BJ (cell line): ENCODE measurements at regions of chr3 and their contacts with region 1.

Region 1: GRCh38 chr3:9843715-9844438 is at the start of gene RPUSD3:
- DNase-seq: peak; percentile 67
- H3K4me3 ChIP-seq: peak within 1 kb of the TSS; percentile 78
- H3K27me3 ChIP-seq: no peaks in the 10 kb centered on the region
- CTCF ChIP-seq: no peak
- polyA plus RNA-seq, gene RPUSD3: 28.5 and 44.9 TPM in 2 replicates

Region 2: DNA sequence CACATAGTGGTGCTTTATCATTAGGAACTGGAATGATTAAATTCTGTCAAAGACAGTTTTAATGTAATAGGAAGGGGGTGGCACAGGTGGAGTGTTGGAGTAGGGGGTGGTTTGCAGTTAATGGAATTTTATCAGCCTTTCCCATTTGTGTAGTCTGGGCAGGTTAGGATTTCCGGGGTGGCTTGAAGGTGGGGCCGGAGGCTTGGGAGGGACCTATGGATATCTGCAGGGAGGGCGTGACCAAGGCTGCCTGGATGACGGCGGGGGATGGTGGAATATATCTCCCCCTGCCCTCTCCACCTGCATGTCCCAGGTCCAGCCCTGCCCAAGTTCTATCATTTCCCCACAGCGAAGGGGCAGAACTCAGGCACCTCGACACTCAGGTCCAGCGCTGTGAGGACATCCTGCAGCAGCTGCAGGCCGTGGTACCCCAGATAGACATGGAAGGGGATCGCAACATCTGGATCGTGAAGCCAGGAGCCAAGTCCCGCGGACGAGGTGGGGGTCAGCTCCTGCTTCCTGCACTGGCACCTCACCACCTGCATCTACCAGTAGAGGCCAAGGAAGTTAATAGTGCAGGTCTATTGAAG is 18.3 kb before region 1 on chr3:
- CTCF ChIA-PET with region 1: no interaction called
- POLR2A ChIA-PET with region 1: no interaction called
- DNase-seq: no peak
- H3K4me3 ChIP-seq: no peak overlapping the region
- H3K27me3 ChIP-seq: no peaks in the 10 kb centered on the region
- CTCF ChIP-seq: no peak

Region 3: GRCh38 chr3:9915254-9916141 is 71.6 kb after region 1 on chr3:
- CTCF ChIA-PET with region 1: interaction called, 10 read pairs
- POLR2A ChIA-PET with region 1: interaction called, 3 read pairs
- DNase-seq: no peak
- H3K4me3 ChIP-seq: peak overlapping the region; percentile 40
- H3K27me3 ChIP-seq: no peaks in the 10 kb centered on the region
- CTCF ChIP-seq: peak; percentile 50

Region 4: GRCh38 chr3:9946112-9947024 is 102.5 kb after region 1 on chr3:
- CTCF ChIA-PET with region 1: interaction called, 10 read pairs
- POLR2A ChIA-PET with region 1: no interaction called
- DNase-seq: peak; percentile 45
- H3K4me3 ChIP-seq: peak overlapping the region; percentile 50
- H3K27me3 ChIP-seq: no peaks in the 10 kb centered on the region
- CTCF ChIP-seq: peak; percentile 45